ENCODE measurements at regions of chr17 and their contacts with region 1.

Region 1: DNA sequence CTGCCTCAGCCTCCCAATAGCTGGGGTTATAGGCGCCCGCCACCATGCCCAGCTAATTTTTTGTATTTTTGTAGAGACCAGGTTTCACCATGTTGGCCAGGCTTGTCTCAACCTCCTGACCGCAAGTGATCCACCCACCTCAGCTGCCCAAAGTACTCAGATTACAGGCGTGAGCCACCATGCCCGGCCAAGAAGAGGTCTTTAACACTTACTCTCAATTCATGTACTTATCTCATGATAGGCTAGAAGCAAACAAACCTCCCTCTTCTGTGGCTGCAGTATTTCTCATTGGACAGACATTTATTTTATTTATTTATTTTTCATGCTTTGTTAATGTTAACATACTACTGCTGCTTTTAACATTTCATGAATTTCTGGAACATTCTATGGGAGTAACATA is 7.0 kb upstream of the NT5C start:
- DNase-seq: no peak
- H3K4me3 ChIP-seq: no peak overlapping the region
- H3K27ac ChIP-seq: peak overlapping the region; percentile 2
- H3K4me1 ChIP-seq: no peaks in the 10 kb centered on the region
- H3K27me3 ChIP-seq: no peaks in the 10 kb centered on the region
- CTCF ChIP-seq: no peak

Region 2: GRCh38 chr17:75124041-75124818 is 14.3 kb before region 1 on chr17:
- CTCF ChIA-PET with region 1: no interaction called
- POLR2A ChIA-PET with region 1: interaction called, 12 read pairs
- intact Hi-C with region 1: no loop called
- DNase-seq: no peak
- H3K4me3 ChIP-seq: no peak overlapping the region
- H3K27ac ChIP-seq: no peak overlapping the region
- H3K4me1 ChIP-seq: no peaks in the 10 kb centered on the region
- H3K27me3 ChIP-seq: no peaks in the 10 kb centered on the region
- CTCF ChIP-seq: no peak

Region 3: DNA sequence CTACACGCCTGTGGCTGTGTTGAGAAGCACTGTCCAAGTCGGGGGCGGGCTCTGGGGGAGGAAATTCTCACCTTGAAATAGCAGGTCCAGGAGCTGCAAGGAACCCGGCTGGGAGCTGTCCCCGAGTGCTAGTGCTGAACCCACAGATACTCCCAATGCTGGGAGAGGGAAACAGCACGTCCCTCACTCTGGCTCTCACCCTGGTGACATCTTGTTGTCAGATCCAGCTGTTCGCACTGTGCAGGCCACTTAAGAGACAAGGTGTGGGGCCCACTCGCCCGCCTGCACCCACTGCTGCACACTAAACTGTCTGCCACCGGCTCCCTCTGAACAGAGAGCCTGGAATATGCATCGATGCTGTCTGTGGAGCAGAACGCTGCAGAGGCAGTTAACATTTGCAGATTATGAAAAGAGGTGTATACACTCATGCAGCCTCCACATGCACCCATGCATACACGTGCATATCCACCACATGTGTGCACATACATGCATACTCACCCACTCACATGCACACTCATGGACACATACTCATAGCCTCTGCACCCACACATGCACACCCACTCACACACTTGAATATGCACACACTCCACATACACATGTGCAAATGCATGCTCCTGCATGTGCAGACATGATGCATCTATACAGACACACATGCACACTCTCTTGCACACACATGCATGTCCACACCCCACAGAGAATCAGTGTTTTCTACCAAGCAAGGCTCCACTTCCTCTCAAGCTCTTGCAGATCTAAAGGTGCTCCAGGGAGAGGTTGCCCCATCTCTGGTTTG is 1771.6 kb after region 1 on chr17:
- CTCF ChIA-PET with region 1: no interaction called
- POLR2A ChIA-PET with region 1: no interaction called
- intact Hi-C with region 1: no loop called
- DNase-seq: peak; percentile 41
- H3K4me3 ChIP-seq: no peak overlapping the region
- H3K27ac ChIP-seq: no peak overlapping the region
- H3K4me1 ChIP-seq: no peaks in the 10 kb centered on the region
- H3K27me3 ChIP-seq: no peaks in the 10 kb centered on the region
- CTCF ChIP-seq: no peak

Measured in A673 (cell line).